Caco-2 (cell line): ENCODE measurements at regions of chr3 and their contacts with region 1.

Region 1: GRCh38 chr3:48439820-48440589 is at the starts of genes CCDC51 and TMA7:
- DNase-seq: peak; percentile 98 to 99
- H3K4me3 ChIP-seq: peak within 1 kb of the TSS; percentile 91
- H3K4me3 Mint-ChIP-seq: peak within 1 kb of the TSS; percentile 90
- H3K27ac Mint-ChIP-seq: peak within 1 kb of the TSS; percentile 75
- H3K4me1 ChIP-seq: peaks cover 17% of the 10 kb centered on the region
- H3K4me1 Mint-ChIP-seq: peaks cover 10% of the 10 kb centered on the region
- H3K27me3 ChIP-seq: no peaks in the 10 kb centered on the region
- H3K27me3 Mint-ChIP-seq: no peaks in the 10 kb centered on the region
- CTCF ChIP-seq: no peak
- total RNA-seq, gene CCDC51: 48.9 and 59.5 TPM in 2 replicates
- total RNA-seq, gene TMA7: 205 and 227 TPM in 2 replicates

Region 2: DNA sequence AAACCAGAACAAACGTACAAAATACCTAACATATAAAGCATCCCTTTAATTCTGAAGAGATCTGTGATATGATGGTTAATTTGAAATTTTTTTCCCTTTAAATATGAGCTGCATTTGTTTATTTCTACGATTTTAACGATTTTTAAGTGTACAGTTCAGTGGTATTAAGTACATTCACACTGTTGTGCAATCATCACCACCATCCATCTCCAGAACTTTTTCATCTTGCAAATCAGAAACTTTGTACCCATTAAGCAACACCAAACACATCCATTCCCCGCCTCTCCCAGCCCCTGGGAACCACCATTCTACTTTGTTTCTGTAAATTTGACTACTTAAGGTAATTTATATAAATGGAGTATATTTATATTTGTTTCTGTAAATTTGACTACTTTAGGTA is 475.3 kb before region 1 on chr3:
- CTCF ChIA-PET with region 1: no interaction called
- POLR2A ChIA-PET with region 1: no interaction called
- intact Hi-C with region 1: no loop called
- DNase-seq: no peak
- H3K4me3 ChIP-seq: no peak overlapping the region
- H3K4me3 Mint-ChIP-seq: no peak overlapping the region
- H3K27ac Mint-ChIP-seq: no peak overlapping the region
- H3K4me1 ChIP-seq: peaks cover 7% of the 10 kb centered on the region; the same call in 1 of the 2 replicates
- H3K4me1 Mint-ChIP-seq: peaks cover 8% of the 10 kb centered on the region
- H3K27me3 ChIP-seq: no peaks in the 10 kb centered on the region
- H3K27me3 Mint-ChIP-seq: no peaks in the 10 kb centered on the region
- CTCF ChIP-seq: no peak

Region 3: DNA sequence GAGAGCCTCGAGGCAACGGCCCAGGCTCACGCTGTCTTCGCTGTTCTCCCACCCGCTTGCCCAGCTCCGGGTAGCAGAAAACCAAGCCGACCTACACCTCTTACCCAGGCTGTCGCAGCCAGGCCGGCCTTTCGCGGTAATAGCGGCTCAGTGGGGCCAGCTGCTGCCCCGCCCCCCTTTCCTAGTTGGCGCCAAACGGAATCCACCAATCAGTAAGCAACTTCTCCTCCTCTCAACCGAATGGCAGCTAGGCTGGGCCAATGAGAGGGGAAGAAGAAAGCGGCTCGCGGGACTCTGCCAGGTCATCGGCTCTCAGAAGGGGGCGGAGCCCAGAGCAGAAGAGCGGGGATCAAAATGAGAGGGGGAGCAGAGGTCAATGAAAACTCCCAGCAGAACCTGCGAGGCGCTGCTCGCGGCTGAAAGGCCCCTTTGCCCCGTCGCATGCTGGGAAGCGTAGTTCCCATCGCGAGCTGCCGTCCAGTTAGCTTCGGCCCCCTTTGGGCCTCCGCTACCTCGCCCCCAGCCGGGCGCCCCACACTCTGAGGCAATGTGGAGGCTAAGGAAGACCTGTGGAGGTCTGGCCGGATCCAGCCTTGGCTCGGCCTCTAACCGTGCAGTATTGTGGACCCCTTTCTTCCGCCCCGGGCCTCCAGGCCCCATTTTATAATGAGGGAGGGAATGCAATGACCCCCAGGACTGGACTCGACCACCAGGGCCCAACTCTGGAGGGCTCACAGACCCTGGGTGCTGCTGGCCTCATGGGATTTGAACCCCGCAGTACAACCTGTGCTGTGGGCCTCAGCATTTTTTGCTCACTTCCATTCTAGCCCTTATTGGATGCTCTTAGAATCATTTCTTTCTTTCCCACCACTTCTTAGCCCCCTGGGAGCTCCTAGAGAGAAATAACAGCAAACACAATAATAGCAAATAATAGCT is 251.5 kb before region 1 on chr3 and contains the start of gene CDC25A:
- CTCF ChIA-PET with region 1: interaction called, 14 read pairs
- POLR2A ChIA-PET with region 1: interaction called, 4 read pairs
- intact Hi-C with region 1: loop called (anchors 5 kb)
- DNase-seq: peak; percentile 97 to 99
- H3K4me3 ChIP-seq: peak within 1 kb of the TSS; percentile 95
- H3K4me3 Mint-ChIP-seq: peak within 1 kb of the TSS; percentile 95
- H3K27ac Mint-ChIP-seq: peak within 1 kb of the TSS; percentile 90
- H3K4me1 ChIP-seq: peaks cover 9% of the 10 kb centered on the region; the same call in 1 of the 2 replicates
- H3K4me1 Mint-ChIP-seq: peaks cover 6% of the 10 kb centered on the region
- H3K27me3 ChIP-seq: no peaks in the 10 kb centered on the region
- H3K27me3 Mint-ChIP-seq: no peaks in the 10 kb centered on the region
- CTCF ChIP-seq: no peak
- total RNA-seq, gene CDC25A: 32.1 and 35.5 TPM in 2 replicates

Region 4: DNA sequence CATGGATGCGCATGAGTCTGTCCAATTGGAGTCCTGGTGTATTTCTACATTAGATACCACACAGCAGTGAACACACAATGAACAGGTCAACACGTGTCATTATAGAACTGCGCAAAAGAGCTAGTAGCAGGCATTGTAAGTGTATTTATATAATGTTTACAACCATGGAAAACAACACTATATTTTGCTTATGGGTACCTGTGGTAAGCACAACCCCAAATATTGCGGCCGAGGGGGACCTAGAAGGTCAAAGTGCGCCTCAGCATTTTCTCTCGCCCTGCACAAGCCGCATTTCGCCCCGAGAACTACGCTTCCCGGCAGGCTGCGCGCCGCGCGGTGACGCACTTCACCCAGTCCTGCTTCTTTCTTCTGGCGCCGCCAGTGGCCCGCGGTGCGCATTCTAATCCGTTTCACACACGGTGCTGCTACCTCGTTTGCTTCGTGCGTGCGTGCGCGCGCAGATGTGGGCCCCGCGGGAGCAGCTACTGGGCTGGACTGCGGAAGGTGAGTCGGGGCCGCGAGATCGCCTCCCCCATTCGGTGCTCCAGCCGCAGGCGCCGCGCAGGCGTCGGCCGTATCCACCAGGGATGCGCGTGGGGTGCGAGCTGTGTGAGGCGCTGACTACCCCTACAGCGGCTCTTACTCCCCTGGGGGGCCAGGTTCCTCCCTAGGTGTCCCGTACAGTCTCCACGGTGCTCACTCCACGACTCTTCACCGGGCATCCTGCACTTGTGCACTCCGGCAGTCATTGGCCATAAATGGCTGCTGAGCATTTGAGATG is 199.1 kb before region 1 on chr3 and contains the start of gene ZNF589:
- CTCF ChIA-PET with region 1: interaction called, 21 read pairs
- POLR2A ChIA-PET with region 1: interaction called, 12 read pairs
- intact Hi-C with region 1: no loop called
- DNase-seq: peak; percentile 94 to 95
- H3K4me3 ChIP-seq: peak within 1 kb of the TSS; percentile 58
- H3K4me3 Mint-ChIP-seq: peak within 1 kb of the TSS; percentile 85
- H3K27ac Mint-ChIP-seq: peak within 1 kb of the TSS; percentile 77
- H3K4me1 ChIP-seq: peaks cover 15% of the 10 kb centered on the region
- H3K4me1 Mint-ChIP-seq: no peaks in the 10 kb centered on the region
- H3K27me3 ChIP-seq: no peaks in the 10 kb centered on the region
- H3K27me3 Mint-ChIP-seq: no peaks in the 10 kb centered on the region
- CTCF ChIP-seq: peak in 1 of 2 experiments; percentile 40
- total RNA-seq, gene ZNF589: 9.7 and 10.9 TPM in 2 replicates

Region 5: GRCh38 chr3:48400824-48401433 is 39.1 kb before region 1 on chr3:
- CTCF ChIA-PET with region 1: interaction called, 405 read pairs
- POLR2A ChIA-PET with region 1: interaction called, 22 read pairs
- intact Hi-C with region 1: loop called (anchors 1 kb)
- DNase-seq: peak; percentile 75 to 76
- H3K4me3 ChIP-seq: no peak overlapping the region
- H3K4me3 Mint-ChIP-seq: no peak overlapping the region
- H3K27ac Mint-ChIP-seq: peak overlapping the region; percentile 63
- H3K4me1 ChIP-seq: no peaks in the 10 kb centered on the region
- H3K4me1 Mint-ChIP-seq: peaks cover 11% of the 10 kb centered on the region
- H3K27me3 ChIP-seq: no peaks in the 10 kb centered on the region
- H3K27me3 Mint-ChIP-seq: no peaks in the 10 kb centered on the region
- CTCF ChIP-seq: peak; percentile 73 to 87

Region 6: DNA sequence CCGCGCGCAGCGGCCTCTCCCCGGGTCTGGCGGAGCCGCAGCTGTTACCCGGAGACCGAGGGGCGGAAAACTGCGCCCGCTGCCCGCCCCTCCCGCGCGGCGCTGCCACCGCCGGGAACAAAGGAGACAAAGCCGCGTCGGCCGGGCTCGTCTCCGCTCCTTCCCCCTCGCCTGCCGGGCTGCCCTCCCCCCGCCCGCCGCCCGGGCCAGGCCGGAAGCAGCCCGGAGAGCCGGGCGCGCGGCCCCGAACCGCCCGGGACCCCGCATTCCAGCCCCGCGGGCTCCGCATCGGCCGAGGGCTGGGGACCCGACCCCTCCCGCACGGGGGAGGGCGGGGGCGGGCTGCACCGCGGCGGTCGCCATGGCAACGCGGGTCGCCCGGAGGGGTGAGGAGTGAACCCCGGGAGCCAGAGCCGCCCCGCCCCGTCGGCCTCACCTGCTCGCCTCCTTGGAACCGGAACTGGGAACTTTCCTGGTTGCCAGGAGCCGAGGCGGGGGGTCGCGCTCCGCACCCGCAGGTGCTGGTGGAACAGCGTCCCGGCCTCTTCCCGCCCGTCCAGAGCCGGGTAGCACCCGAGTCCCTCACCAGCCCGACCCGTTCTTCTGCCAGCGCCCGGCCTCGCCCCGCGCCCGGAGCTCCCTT is 10.6 kb before region 1 on chr3:
- CTCF ChIA-PET with region 1: interaction called, 4 read pairs
- POLR2A ChIA-PET with region 1: interaction called, 12 read pairs
- intact Hi-C with region 1: no loop called
- DNase-seq: peak; percentile 87
- H3K4me3 ChIP-seq: peak overlapping the region; percentile 84
- H3K4me3 Mint-ChIP-seq: peak overlapping the region; percentile 98
- H3K27ac Mint-ChIP-seq: no peak overlapping the region
- H3K4me1 ChIP-seq: peaks cover 65% of the 10 kb centered on the region
- H3K4me1 Mint-ChIP-seq: peaks cover 52% of the 10 kb centered on the region
- H3K27me3 ChIP-seq: no peaks in the 10 kb centered on the region
- H3K27me3 Mint-ChIP-seq: no peaks in the 10 kb centered on the region
- CTCF ChIP-seq: no peak

Region 7: GRCh38 chr3:48548729-48549705 is 109.0 kb after region 1 on chr3:
- CTCF ChIA-PET with region 1: interaction called, 11 read pairs
- POLR2A ChIA-PET with region 1: no interaction called
- intact Hi-C with region 1: no loop called
- DNase-seq: peak; percentile 80 to 87
- H3K4me3 ChIP-seq: no peak overlapping the region
- H3K4me3 Mint-ChIP-seq: no peak overlapping the region
- H3K27ac Mint-ChIP-seq: no peak overlapping the region
- H3K4me1 ChIP-seq: peaks cover 16% of the 10 kb centered on the region
- H3K4me1 Mint-ChIP-seq: peaks cover 11% of the 10 kb centered on the region
- H3K27me3 ChIP-seq: no peaks in the 10 kb centered on the region
- H3K27me3 Mint-ChIP-seq: no peaks in the 10 kb centered on the region
- CTCF ChIP-seq: peak; percentile 86 to 90